Tibial artery (tissue), 4 donors: ENCODE measurements at regions of chr4 and their contacts with region 1.

Region 1: DNA sequence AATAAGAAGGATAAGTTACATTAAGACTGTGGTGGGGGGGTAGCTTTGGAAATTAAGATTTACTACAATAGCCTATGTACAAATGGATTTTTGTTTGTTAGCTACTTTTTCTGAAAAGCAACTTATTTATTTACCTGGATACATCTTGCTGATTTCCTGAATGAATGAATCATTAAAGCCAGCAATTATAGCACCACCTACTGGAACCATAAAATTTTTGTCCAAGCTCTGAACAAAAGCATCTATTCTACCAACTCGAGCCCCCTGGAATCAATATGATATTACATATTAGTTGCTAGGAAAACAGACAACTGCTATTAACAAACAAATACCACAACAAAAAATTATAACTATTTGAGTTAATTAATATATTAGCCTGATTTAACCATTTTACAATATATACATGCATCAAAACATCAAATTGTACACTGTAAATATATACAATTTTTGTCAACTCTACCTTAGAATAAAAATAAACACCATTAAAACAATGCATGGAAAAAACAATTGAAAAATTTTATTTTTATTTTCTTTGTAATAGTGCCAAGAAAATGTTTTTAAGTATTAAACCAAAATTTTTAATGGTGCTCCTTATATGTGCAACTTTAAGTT is 15.3 kb downstream of the SEPSECS start:
- DNase-seq: no peak
- H3K4me3 ChIP-seq: no peak overlapping the region
- H3K27ac ChIP-seq: no peak overlapping the region
- H3K4me1 ChIP-seq: no peaks in the 10 kb centered on the region
- H3K27me3 ChIP-seq: no peaks in the 10 kb centered on the region
- CTCF ChIP-seq: peak; percentile 37 to 42

Region 2: DNA sequence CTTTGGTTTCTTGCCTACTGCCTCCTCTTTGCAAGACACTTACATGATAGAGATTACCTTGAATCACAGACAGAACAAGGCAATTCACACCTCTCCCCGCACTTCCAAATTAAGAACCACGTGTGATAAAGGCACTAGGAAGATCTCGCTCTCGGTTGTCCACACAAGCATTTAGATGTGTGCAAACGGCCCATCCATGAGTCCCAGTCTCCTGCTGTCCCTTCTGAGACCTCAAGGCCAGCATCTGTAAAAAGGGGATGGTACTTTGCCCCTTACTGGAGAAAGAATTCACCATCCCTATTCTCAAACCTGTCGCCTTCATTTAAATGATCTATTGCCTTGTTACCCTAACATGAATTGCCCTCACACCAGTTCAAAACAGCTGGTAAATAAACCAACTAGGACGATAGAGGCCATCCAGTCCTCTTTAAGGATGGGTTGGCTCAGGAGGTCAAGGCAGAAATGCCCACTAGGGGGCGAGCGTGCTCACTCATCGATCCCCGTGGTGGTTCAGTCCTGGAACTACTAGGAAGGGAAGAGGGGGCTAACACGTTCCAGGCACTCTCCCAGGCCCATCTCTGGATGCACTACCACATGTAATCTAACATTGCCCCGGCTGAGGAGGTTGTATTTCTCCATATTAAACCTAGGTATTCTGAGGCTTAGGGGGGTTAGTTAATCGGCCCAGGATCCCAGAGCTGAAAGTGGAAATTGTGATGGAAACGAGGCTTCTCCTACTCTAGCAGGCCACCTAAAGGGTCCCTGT is 656.4 kb before region 1 on chr4:
- intact Hi-C with region 1: loop called (anchors 10 kb)
- DNase-seq: peak; percentile 75 to 76
- H3K4me3 ChIP-seq: no peak overlapping the region
- H3K27ac ChIP-seq: no peak overlapping the region
- H3K4me1 ChIP-seq: no peaks in the 10 kb centered on the region
- H3K27me3 ChIP-seq: no peaks in the 10 kb centered on the region
- CTCF ChIP-seq: peak; percentile 69 to 83